ENCODE measurements at regions of chr5 and their contacts with region 1.

Region 1: DNA sequence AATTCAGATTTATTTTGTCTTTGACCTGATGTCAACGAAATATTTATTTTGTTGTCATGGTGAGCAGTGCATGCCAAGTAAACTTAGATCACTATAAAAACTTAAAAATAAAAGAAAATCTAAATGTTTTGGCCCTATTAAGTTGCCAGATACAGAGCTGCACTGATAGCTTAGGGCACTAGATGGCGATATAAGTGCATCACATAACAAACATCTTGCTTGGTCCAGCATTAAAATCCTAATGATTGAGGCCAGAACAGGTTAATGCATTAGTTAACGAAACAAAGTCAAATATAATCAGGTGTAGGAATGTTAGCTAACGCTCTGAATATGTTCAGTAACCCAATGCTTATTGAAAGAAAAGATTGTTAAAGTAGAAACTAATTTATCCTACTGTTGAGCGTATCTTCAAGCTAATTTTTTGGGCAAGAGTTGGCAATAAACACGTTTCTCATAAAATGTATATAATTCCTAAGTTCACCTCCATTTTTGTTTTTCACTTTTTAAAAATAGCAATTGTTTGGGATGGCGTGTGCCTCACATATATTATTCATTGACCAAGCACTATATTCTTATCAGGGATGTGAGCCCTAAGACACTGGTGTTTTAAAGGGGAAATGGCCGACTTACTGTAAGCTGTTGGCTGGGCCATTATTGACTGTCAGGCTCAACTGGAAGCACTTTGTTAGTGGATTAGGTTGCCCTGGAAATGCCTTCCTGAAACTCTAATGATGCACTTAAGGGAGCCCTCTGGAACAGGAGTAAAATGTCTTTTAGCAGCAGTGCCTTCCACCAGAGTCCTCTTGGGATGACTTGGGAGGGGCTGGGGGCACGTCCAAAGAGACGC is 33.3 kb downstream of the KCTD16 start:
- DNase-seq: no peak
- H3K4me3 Mint-ChIP-seq: no peak overlapping the region
- H3K27ac Mint-ChIP-seq: no peak overlapping the region
- H3K4me1 Mint-ChIP-seq: no peaks in the 10 kb centered on the region
- H3K27me3 Mint-ChIP-seq: peaks cover 48% of the 10 kb centered on the region

Region 2: GRCh38 chr5:145681686-145682085 is 1477.7 kb after region 1 on chr5:
- intact Hi-C with region 1: loop called (anchors 10 kb)
- DNase-seq: peak; percentile 2
- H3K4me3 Mint-ChIP-seq: no peak overlapping the region
- H3K27ac Mint-ChIP-seq: no peak overlapping the region
- H3K4me1 Mint-ChIP-seq: no peaks in the 10 kb centered on the region
- H3K27me3 Mint-ChIP-seq: peaks cover 2% of the 10 kb centered on the region

Measured in activated T-helper 1 cell treated with anti-CD3 and anti-CD28 coated beads, Interleukin-12 subunit alpha, Interleukin-12 subunit beta, Interleukin-2, Interleukin-4 antibody, amounts not matched to agents 30 ng/mL and 10 ng/mL and 1 ng/mL, durations not matched to agents 14 hours and 24 hours and 36 hours (primary cell).